ENCODE measurements at regions of chr2 and their contacts with region 1.

Region 1: DNA sequence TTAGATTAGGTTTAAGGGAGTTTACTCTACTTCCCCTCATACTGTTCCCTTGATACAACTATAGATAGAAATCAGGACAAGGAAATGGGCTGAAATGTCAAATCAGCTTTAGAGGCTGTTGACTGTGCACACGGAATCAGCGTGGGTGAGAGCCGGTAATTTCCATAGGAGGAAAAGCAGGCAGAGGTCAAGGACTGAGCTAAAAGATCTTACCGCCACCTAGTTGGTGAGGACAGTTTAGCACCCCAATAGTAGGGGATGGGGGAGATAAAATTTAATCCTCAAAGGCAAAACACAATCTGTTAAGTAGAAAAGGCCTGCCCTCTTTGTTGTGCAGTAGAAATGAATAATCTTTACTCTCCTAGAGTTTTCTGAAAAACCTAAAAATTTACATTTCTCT is 1154.5 kb upstream of the CHAC2 start:
- DNase-seq: peak in 1 of 2 experiments; percentile 18
- H3K4me3 ChIP-seq: no peak overlapping the region
- H3K4me3 Mint-ChIP-seq: no peak overlapping the region
- H3K27ac Mint-ChIP-seq: no peak overlapping the region
- H3K4me1 ChIP-seq: no peaks in the 10 kb centered on the region
- H3K4me1 Mint-ChIP-seq: no peaks in the 10 kb centered on the region
- H3K27me3 ChIP-seq: no peaks in the 10 kb centered on the region
- H3K27me3 Mint-ChIP-seq: no peaks in the 10 kb centered on the region
- CTCF ChIP-seq: peak; percentile 28 to 33

Region 2: DNA sequence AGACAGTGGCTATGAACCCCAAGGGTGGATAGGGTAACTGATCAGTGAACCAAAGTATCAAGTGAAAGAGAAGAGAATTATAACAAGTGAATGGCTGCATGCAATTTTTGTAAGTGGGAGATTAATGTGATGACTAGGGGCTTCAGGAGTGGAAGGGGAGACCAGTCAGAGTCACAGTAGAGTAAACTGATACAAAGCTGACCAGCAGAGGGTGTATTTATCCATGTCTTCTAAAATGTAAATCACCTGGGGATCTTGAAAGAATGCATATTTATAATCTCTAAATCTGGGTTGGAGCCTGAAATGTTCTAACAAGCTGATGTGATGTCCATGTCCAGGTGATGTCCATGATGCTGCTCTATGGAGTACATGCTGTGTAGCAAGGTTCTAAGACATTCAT is 196.7 kb before region 1 on chr2:
- CTCF ChIA-PET with region 1: no interaction called
- POLR2A ChIA-PET with region 1: no interaction called
- intact Hi-C with region 1: loop called (anchors 1 kb)
- DNase-seq: peak in 1 of 2 experiments; percentile 18
- H3K4me3 ChIP-seq: no peak overlapping the region
- H3K4me3 Mint-ChIP-seq: no peak overlapping the region
- H3K27ac Mint-ChIP-seq: no peak overlapping the region
- H3K4me1 ChIP-seq: no peaks in the 10 kb centered on the region
- H3K4me1 Mint-ChIP-seq: no peaks in the 10 kb centered on the region
- H3K27me3 ChIP-seq: no peaks in the 10 kb centered on the region
- H3K27me3 Mint-ChIP-seq: no peaks in the 10 kb centered on the region
- CTCF ChIP-seq: peak; percentile 35 to 41

Measured in Caco-2 (cell line).